ENCODE measurements at regions of chr9 and their contacts with region 1.

Region 1: GRCh38 chr9:2321523-2322151 is 299.9 kb upstream of the VLDLR start:
- DNase-seq: no peak

Region 2: DNA sequence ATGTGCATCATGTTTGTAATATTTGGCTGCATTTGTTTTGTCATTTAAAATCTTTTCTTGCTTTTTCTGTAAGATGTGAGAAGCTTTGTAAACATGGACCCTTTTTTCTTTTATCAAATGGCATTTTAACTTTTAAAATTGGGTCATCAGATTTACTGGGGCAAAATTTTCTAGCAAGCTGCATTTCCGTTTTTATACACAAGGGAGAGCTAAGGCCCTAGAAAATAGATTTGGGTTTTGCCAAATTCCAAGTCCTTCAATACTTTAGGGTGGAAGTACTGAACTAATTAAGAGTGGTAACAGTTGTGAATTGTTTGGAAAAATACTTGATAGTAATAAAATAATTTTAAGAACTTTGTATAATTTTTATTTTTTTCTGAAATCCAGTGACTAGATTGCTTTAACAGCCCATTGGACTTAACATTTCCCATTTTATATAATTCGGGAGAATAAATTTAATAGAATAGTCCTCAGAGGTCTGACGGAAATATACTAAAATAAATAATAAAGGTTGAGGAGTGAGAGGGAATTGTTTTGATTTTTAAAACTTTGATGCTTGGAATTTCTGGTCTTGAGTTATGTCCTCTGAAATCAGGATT is 189.1 kb before region 1 on chr9:
- intact Hi-C with region 1: loop called (anchors 10 kb)
- DNase-seq: no peak

Region 3: DNA sequence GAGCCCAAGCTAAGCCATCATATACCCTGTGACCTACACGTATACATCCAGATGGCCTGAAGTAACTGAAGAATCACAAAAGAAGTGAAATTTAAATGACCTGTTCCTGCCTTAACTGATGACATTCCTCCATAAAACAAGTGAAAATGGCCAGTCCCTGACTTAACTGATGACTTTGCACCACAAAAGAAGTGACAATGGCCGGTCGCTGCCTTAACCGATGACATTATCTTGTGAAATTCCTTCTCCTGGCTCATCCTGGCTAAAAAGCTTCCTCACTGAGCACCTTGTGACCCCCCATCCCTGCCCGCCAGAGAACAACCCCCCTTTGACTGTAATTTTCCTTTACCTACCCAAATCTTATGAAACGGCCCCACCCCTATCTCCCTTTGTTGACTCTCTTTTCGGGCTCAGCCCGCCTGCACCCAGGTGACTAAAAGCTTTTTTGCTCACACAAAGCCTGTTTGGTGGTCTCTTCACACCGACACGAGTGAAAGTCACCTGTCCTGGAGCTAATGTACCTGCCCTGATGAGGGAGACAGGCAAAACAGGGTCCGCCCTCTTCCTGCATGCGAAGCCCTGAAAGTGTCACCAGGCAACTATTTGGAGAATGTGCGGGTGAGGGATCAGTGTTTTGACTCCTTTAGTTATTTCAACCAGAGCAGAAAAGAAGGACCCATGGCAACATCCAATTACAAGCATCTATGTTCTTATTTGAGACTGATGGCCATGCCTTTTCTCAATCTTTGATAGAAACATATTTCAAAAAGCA is 40.4 kb before region 1 on chr9:
- intact Hi-C with region 1: no loop called
- DNase-seq: no peak

Measured in cardiac septum (tissue), 1 donor.